ENCODE measurements at regions of chr12 and their contacts with region 1.

Region 1: DNA sequence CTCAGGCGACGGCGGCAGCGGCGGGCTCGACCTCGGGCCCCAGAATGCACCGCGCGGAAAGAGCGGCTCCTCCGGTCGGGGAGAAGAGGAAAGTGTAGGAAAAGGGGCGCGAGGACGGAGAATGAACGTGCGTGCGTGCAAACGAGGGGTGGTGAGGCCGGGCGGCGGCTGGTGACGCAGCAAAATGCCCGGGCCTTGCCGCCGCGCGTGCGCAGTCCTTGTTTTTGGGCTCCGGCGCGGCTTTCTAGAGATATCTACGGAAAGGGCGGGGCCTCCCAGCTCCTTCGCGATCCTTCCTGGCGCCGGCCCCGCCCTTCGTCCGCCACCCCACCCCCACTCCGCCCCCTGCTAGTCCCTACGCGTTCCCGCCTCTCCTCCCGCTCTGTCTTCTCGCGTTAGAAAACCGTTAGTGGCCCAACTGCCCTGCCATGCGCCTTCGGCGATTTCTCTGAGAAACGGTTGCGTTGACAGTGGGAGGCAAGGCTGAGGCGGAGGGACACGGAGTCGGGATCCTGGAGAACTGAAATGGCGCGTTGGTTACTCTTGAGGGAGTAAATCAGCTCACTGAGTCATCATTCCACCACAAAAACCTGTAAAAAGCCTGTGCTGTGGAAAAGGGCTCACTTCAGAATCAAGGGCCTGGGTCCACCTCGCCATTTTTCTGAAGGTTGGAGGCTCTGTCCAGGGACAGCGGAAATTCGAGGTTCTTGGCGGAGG is at the start of gene PTGES3:
- DNase-seq: peak; percentile 96
- ATAC-seq: peak; percentile 94
- H3K4me3 ChIP-seq: peak within 1 kb of the TSS; percentile 93
- H3K27ac ChIP-seq: peak within 1 kb of the TSS; percentile 99
- H3K4me1 ChIP-seq: peaks cover 6% of the 10 kb centered on the region
- H3K27me3 ChIP-seq: no peaks in the 10 kb centered on the region
- CTCF ChIP-seq: no peak
- POLR2A ChIP-seq: peak; percentile 85
- RAD21 ChIP-seq: no peak
- total RNA-seq, gene PTGES3: 42.7 and 101 TPM in 2 replicates

Region 2: DNA sequence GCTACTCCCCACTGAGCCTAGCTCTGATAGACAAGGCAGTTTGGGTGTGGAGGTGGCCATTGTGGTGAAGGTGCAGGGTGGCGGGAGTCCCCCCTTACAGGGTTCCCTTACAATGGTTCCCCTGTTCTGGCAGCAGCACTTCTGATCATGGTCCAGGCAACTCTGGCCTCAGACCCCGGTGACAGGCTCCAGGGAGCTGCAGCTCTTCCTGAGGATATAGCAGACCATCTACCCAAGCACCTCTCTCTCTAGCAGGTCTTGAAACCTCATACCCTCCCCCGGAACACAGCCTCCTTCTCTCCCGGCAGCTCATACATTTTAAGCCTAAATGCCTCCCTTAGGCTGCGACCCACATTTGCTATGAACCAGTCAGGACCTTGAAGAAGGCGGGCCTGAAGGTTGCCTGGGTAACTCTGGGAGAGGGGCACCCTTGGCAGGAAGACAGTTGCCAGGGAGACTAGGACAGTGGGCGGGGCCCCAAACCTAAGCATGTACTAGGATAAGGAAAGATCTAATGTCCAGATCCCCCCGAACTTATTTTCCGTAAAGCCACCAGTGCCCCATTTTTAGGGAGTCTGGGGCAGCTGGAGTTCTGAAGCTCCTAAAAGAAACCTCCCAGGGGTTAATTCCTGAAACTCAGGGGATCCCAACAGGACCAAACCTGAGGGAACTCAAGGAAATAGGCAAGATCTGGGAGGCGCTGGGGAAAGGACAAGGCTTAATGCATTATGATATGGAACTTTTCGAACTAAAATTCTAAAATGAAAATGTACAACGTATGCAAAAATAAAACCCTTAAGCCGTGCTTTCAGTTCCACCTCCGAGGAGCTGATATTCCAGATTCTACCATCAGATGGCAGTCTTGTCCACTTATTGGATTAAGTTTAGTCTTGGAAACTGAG is 949.9 kb before region 1 on chr12:
- CTCF ChIA-PET with region 1: no interaction called
- POLR2A ChIA-PET with region 1: no interaction called
- dilution Hi-C with region 1: no loop called
- in situ Hi-C with region 1: no loop called
- intact Hi-C with region 1: no loop called
- DNase-seq: peak; percentile 82
- ATAC-seq: peak; percentile 75
- H3K4me3 ChIP-seq: peak overlapping the region; percentile 68
- H3K27ac ChIP-seq: peak overlapping the region; percentile 47
- H3K4me1 ChIP-seq: peaks cover 6% of the 10 kb centered on the region
- H3K27me3 ChIP-seq: no peaks in the 10 kb centered on the region
- CTCF ChIP-seq: peak; percentile 93
- POLR2A ChIP-seq: no peak
- RAD21 ChIP-seq: peak; percentile 89

Region 3: GRCh38 chr12:56636675-56637540 is 51.4 kb before region 1 on chr12:
- CTCF ChIA-PET with region 1: interaction called, 9 read pairs
- POLR2A ChIA-PET with region 1: interaction called, 4 read pairs
- dilution Hi-C with region 1: no loop called
- in situ Hi-C with region 1: no loop called
- intact Hi-C with region 1: loop called (anchors 1 kb)
- DNase-seq: peak; percentile 100
- ATAC-seq: peak; percentile 81
- H3K4me3 ChIP-seq: peak overlapping the region; percentile 69
- H3K27ac ChIP-seq: peak overlapping the region; percentile 84
- H3K4me1 ChIP-seq: peaks cover 10% of the 10 kb centered on the region
- H3K27me3 ChIP-seq: no peaks in the 10 kb centered on the region
- CTCF ChIP-seq: peak; percentile 82
- POLR2A ChIP-seq: no peak
- RAD21 ChIP-seq: peak; percentile 79

Region 4: GRCh38 chr12:56645717-56646446 is 42.4 kb before region 1 on chr12 and contains the start of gene ATP5F1B:
- CTCF ChIA-PET with region 1: no interaction called
- POLR2A ChIA-PET with region 1: no interaction called
- dilution Hi-C with region 1: no loop called
- in situ Hi-C with region 1: no loop called
- intact Hi-C with region 1: loop called (anchors 1 kb)
- DNase-seq: peak; percentile 100
- ATAC-seq: peak; percentile 99
- H3K4me3 ChIP-seq: peak within 1 kb of the TSS; percentile 74
- H3K27ac ChIP-seq: peak within 1 kb of the TSS; percentile 82
- H3K4me1 ChIP-seq: no peaks in the 10 kb centered on the region
- H3K27me3 ChIP-seq: no peaks in the 10 kb centered on the region
- CTCF ChIP-seq: no peak
- POLR2A ChIP-seq: peak; percentile 98
- RAD21 ChIP-seq: no peak
- total RNA-seq, gene ATP5F1B: 795 and 812 TPM in 2 replicates

Region 5: GRCh38 chr12:56724972-56725722 is 36.9 kb after region 1 on chr12 and contains the start of gene NACA:
- CTCF ChIA-PET with region 1: no interaction called
- POLR2A ChIA-PET with region 1: interaction called, 5 read pairs
- dilution Hi-C with region 1: no loop called
- in situ Hi-C with region 1: no loop called
- intact Hi-C with region 1: loop called (anchors 1 kb)
- DNase-seq: peak; percentile 98
- ATAC-seq: peak; percentile 93
- H3K4me3 ChIP-seq: peak within 1 kb of the TSS; percentile 80
- H3K27ac ChIP-seq: peak within 1 kb of the TSS; percentile 76
- H3K4me1 ChIP-seq: peaks cover 5% of the 10 kb centered on the region
- H3K27me3 ChIP-seq: no peaks in the 10 kb centered on the region
- CTCF ChIP-seq: no peak
- POLR2A ChIP-seq: peak; percentile 97
- RAD21 ChIP-seq: no peak; the same call in 1 of the 2 replicates
- total RNA-seq, gene NACA: 1,223 and 1,512 TPM in 2 replicates